IMR-90 (cell line): ENCODE measurements at regions of chr1 and their contacts with region 1.

Region 1: DNA sequence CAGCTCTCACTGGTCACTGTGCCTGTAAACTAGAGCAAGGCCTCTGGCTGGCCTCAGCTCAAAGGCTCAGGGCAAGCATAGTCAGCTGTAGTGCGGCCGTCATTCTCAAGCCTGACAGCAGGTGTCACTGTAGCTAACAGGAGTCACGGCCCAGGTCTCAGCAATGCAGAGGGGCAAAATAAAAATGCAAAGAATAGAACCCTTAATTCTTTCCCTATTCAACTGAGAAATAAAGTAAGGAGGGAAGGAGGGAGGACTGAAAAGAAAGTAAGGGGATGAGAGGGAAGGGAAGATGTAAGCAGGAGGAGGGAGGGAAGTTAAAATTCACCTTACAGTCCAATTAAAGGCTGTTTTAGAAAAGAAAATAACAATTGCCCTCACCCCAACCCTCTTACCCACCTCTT is 106.1 kb downstream of the KIAA0319L start:
- DNase-seq: peak; percentile 81
- ATAC-seq: peak; percentile 68
- H3K4me3 ChIP-seq: no peak overlapping the region
- H3K27ac ChIP-seq: peak overlapping the region; percentile 45; the same call in 1 of the 2 replicates
- H3K4me1 ChIP-seq: peaks cover 25% of the 10 kb centered on the region
- H3K27me3 ChIP-seq: no peaks in the 10 kb centered on the region
- CTCF ChIP-seq: peak; percentile 87
- POLR2A ChIP-seq: no peak
- RAD21 ChIP-seq: peak; percentile 83

Region 2: GRCh38 chr1:35390600-35391494 is 60.3 kb before region 1 on chr1:
- CTCF ChIA-PET with region 1: no interaction called
- POLR2A ChIA-PET with region 1: no interaction called
- dilution Hi-C with region 1: no loop called
- in situ Hi-C with region 1: no loop called
- intact Hi-C with region 1: no loop called
- DNase-seq: peak; percentile 26
- ATAC-seq: no peak
- H3K4me3 ChIP-seq: no peak overlapping the region
- H3K27ac ChIP-seq: no peak overlapping the region
- H3K4me1 ChIP-seq: no peaks in the 10 kb centered on the region
- H3K27me3 ChIP-seq: no peaks in the 10 kb centered on the region
- CTCF ChIP-seq: no peak
- POLR2A ChIP-seq: no peak
- RAD21 ChIP-seq: no peak

Region 3: DNA sequence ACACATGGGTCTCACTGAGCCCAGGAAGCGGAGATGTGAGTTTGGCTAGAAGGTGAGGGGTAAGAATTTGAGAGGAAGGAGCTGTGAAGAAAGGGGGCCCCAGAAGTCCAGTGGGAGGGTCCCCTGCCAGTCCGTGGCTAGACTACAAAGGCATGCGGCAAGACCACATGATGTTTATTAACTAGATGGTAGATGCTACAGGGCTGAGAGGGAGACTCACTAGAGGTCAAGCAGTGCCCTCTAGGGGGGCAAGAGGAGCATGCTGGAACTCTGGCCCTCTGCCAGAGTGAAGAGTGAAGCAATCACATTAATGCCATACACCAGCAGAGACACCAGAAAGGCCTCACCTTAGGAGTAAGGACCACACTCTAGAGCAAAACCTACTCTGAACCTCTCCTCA is 93.9 kb after region 1 on chr1:
- CTCF ChIA-PET with region 1: interaction called, 12 read pairs
- POLR2A ChIA-PET with region 1: no interaction called
- dilution Hi-C with region 1: no loop called
- in situ Hi-C with region 1: no loop called
- intact Hi-C with region 1: no loop called
- DNase-seq: peak; percentile 45
- ATAC-seq: peak; percentile 80
- H3K4me3 ChIP-seq: no peak overlapping the region
- H3K27ac ChIP-seq: no peak overlapping the region
- H3K4me1 ChIP-seq: peaks cover 13% of the 10 kb centered on the region
- H3K27me3 ChIP-seq: no peaks in the 10 kb centered on the region
- CTCF ChIP-seq: peak; percentile 33
- POLR2A ChIP-seq: no peak
- RAD21 ChIP-seq: peak; percentile 25; the same call in 1 of the 2 replicates

Region 4: DNA sequence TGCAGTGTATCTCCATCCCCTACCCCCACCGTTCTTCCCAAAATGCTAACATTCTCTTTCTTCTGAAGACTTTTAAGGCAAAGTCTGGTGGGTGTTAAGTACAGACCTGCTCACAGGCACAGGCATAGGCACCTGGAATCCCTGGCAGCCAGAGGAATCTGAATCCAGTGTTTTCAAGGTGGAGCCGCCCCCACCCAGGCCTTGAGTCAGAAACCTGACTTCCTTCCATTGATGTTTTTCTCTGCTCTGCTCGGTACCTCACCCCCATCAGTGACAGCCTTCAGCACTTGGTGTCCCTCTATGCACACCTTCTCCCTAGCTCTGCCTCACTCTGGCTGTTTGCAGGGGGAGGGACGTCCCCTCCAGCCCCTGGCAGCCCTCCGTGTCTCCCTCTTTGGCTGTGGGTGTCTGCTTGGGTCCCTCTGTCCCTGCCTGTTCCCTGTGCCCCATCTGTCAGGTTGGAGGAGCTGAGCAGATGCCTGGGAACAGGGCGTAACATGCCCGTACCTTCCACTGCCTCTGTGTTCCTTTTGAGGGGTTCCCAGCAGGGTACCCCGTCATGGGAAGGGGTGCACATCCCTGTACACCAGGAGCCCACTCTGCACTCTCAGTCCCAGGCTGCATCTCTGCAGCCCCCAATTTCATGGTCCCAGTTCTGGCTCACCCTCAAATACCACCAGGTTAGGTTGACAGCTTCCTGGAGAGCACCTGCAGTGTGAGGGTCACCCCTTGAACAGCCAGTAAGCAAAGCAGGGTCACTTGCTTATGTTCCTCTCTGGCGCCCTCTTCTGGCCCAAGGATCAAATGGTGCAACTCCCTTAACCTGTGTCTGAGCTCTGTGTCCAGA is 113.1 kb after region 1 on chr1:
- CTCF ChIA-PET with region 1: interaction called, 21 read pairs
- POLR2A ChIA-PET with region 1: interaction called, 4 read pairs
- dilution Hi-C with region 1: no loop called
- in situ Hi-C with region 1: loop called (anchors 5 kb)
- intact Hi-C with region 1: loop called (anchors 1 kb)
- DNase-seq: peak; percentile 78
- ATAC-seq: peak; percentile 62
- H3K4me3 ChIP-seq: no peak overlapping the region
- H3K27ac ChIP-seq: no peak overlapping the region
- H3K4me1 ChIP-seq: peaks cover under 1% of the 10 kb centered on the region; the same call in 1 of the 2 replicates
- H3K27me3 ChIP-seq: no peaks in the 10 kb centered on the region
- CTCF ChIP-seq: peak; percentile 79
- POLR2A ChIP-seq: no peak
- RAD21 ChIP-seq: peak; percentile 78

Region 5: GRCh38 chr1:35715568-35716002 is 264.5 kb after region 1 on chr1:
- CTCF ChIA-PET with region 1: interaction called, 5 read pairs
- POLR2A ChIA-PET with region 1: no interaction called
- dilution Hi-C with region 1: no loop called
- in situ Hi-C with region 1: loop called (anchors 5 kb)
- intact Hi-C with region 1: no loop called
- DNase-seq: peak; percentile 69
- ATAC-seq: peak; percentile 30
- H3K4me3 ChIP-seq: no peak overlapping the region
- H3K27ac ChIP-seq: no peak overlapping the region
- H3K4me1 ChIP-seq: peaks cover 9% of the 10 kb centered on the region
- H3K27me3 ChIP-seq: no peaks in the 10 kb centered on the region
- CTCF ChIP-seq: peak; percentile 75
- POLR2A ChIP-seq: no peak
- RAD21 ChIP-seq: peak; percentile 71